ENCODE measurements at regions of chr17 and their contacts with region 1.

Region 1: DNA sequence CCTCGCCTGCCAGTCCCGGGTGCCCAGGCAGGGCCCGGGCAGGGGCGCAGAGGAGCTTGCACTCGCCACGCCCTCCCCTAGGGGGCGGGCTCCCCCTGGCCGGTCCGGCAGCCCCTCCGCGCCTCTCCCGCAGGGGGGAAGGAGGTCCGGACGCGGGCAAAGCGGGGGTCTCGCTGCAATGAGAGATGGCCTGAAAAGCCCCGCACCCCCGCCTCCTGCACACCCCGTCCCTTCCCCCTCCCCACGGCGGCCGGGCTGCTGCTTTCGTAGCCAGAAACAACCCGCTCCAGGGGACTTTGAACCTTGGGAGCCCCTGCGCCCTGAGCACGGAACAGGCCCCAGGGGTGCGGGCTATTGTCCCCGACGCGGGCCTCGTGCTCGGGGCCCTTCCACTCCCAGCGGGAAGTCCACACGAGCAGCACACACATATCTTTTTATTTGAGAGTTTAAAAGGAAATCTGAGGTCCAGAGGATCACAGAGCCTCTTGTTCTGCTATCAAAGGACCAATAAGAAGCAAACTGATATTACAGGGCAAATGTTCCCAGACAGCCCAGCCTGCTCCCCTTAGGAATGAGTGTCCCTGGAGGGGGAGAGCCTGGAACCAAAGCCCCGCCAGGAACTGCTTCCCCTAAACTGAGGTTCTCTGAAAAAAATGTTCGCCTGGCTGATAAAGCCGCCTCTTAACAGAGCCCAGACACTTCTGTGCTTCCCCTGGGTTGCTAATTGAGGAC is 5.8 kb upstream of the CBX4 start:
- DNase-seq: peak in 6 of 7 donors; percentile 43 to 70 (median 54)
- H3K4me3 ChIP-seq: peak overlapping the region in 1 of 4 donors; percentile 74
- H3K27ac ChIP-seq: peak overlapping the region in 4 of 5 donors; percentile 35 to 83 (median 50)
- H3K4me1 ChIP-seq: peaks cover 24 to 45% of the 10 kb centered on the region in 2 donors
- H3K27me3 ChIP-seq: peaks cover 34% of the 10 kb centered on the region
- CTCF ChIP-seq: peak; percentile 25 to 68 (median 49)
- POLR2A ChIP-seq: no peak

Region 2: GRCh38 chr17:79923974-79924638 is 79.1 kb after region 1 on chr17:
- intact Hi-C with region 1: loop called in 1 of 2 experiments (anchors 5 kb)
- DNase-seq: peak in 2 of 7 donors; percentile 43 to 59
- H3K4me3 ChIP-seq: no peak overlapping the region
- H3K27ac ChIP-seq: no peak overlapping the region
- H3K4me1 ChIP-seq: peaks cover 6 to 14% of the 10 kb centered on the region in 2 donors
- H3K27me3 ChIP-seq: peaks cover 8% of the 10 kb centered on the region
- CTCF ChIP-seq: peak in 2 of 6 experiments; percentile 26 to 31
- POLR2A ChIP-seq: no peak

Region 3: GRCh38 chr17:80377798-80378197 is 532.8 kb after region 1 on chr17:
- intact Hi-C with region 1: no loop called
- DNase-seq: peak in 1 of 7 donors; percentile 14
- H3K4me3 ChIP-seq: no peak overlapping the region
- H3K27ac ChIP-seq: no peak overlapping the region
- H3K4me1 ChIP-seq: peaks cover 0 to 7% of the 10 kb centered on the region in 2 donors
- H3K27me3 ChIP-seq: no peaks in the 10 kb centered on the region
- CTCF ChIP-seq: no peak
- POLR2A ChIP-seq: no peak